ENCODE measurements at regions of chr1 and their contacts with region 1.

Region 1: GRCh38 chr1:154974063-154974807 is at the start of gene CKS1B:
- DNase-seq: peak; percentile 96 to 100
- H3K4me3 ChIP-seq: peak within 1 kb of the TSS; percentile 87
- H3K27ac ChIP-seq: peak within 1 kb of the TSS; percentile 97
- H3K4me1 ChIP-seq: peaks cover 48% of the 10 kb centered on the region
- H3K27me3 ChIP-seq: no peaks in the 10 kb centered on the region
- CTCF ChIP-seq: no peak
- total RNA-seq, gene CKS1B: 236 and 300 TPM in 2 replicates

Region 2: DNA sequence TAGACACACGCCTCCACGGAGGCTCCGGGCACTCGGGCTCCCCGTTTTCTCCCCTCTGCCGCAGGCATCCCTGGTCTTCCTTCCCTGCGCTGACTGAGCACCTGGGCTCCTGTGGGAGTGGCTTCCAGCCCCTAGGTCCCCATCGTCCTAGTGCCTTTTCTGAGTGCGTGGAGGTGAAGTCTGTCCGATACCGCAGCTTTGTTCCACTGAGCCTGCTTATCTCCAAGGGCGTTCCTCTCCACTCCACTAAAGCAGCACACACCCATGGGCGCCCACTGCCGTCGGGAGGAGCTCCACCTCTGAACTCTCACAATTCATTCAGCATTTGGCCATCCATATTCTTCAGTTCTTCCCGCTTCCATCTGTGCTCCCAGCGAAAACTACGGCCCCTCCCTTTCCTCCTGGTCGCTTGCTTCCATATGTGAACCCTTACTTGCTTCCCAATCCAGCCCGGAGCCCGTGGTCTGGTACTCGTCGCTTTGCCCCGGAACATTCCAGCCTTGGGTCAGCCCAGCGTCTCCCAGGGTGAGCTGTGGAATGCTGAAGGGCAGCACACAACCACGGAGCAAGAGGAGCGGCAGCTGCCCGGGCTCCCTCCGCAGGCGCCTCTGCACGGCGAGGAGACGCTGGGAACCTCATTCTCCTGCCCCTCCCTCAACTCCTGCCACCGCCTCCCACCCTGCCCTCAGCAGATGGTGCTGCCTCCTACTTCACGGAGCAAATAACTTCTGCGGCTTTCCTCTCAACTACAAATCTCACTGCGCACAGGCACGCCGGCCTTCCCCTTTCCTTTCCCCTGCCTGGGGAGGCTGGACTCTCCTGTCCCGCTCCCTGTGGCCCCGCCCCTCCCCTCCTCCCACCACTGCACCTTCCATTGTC is 621.4 kb before region 1 on chr1:
- CTCF ChIA-PET with region 1: no interaction called
- POLR2A ChIA-PET with region 1: interaction called, 12 read pairs
- intact Hi-C with region 1: no loop called
- DNase-seq: peak in 1 of 2 experiments; percentile 52
- H3K4me3 ChIP-seq: peak overlapping the region; percentile 27; the same call in 1 of the 2 replicates
- H3K27ac ChIP-seq: no peak overlapping the region
- H3K4me1 ChIP-seq: no peaks in the 10 kb centered on the region
- H3K27me3 ChIP-seq: peaks cover 45% of the 10 kb centered on the region
- CTCF ChIP-seq: no peak

Region 3: DNA sequence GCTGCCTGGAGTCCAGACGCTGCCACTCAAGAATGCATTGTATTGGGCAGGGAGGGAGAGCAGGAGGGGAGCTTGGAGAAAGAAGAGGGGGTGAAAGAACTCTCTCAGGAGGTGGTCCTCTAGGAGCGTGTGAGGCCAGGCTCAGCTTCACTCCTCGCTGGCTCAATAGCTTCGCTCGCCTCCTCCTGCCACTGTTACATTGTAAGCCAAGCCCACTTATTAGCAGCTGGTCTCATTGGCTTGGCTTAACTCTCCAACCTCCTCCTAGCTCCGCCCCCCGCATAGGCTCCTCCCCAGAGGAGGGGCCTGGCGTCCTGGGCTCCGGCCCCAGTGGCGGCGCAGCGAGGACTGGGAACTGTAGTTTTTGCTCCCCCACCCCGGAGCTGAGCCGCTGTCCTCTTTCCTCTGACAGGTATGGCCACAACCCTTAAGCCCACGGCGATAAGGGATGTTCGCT is 104.1 kb before region 1 on chr1 and contains the start of gene KCNN3:
- CTCF ChIA-PET with region 1: no interaction called
- POLR2A ChIA-PET with region 1: no interaction called
- intact Hi-C with region 1: no loop called
- DNase-seq: peak; percentile 42 to 85
- H3K4me3 ChIP-seq: no peak within 1 kb of the TSS
- H3K27ac ChIP-seq: no peak within 1 kb of the TSS
- H3K4me1 ChIP-seq: no peaks in the 10 kb centered on the region
- H3K27me3 ChIP-seq: peaks cover 72% of the 10 kb centered on the region
- CTCF ChIP-seq: no peak
- total RNA-seq, gene KCNN3: 0.33 and 1.1 TPM in 2 replicates

Region 4: DNA sequence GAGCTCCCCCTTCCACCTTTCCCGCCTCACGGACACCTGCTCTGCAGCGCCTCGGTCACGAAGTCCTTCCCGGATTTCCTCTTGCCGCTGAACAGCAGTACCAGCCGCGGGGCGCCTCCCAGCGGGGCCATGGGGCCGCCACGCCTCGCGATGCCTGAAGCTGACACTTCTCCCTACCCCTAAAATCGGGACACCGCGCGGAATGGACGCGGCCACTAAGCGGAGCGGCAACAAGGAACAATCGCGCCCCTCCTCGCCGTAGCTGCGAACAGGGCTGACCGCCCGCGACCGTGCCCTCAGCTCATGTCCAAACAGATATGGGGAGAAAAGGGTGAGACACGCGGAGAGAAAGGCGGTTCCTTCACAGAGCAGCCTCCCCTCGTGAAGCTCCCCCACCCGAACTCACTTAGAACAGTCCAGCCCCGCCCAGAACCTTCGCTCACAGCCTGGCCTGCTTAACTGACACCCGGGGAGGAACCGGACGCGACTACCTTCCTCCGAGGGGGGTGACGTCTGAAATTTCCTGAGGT is 37.6 kb before region 1 on chr1 and contains the start of gene PMVK:
- CTCF ChIA-PET with region 1: no interaction called
- POLR2A ChIA-PET with region 1: interaction called, 26 read pairs
- intact Hi-C with region 1: loop called (anchors 1 kb)
- DNase-seq: peak; percentile 87 to 95
- H3K4me3 ChIP-seq: peak within 1 kb of the TSS; percentile 62
- H3K27ac ChIP-seq: peak within 1 kb of the TSS; percentile 93
- H3K4me1 ChIP-seq: peaks cover 50% of the 10 kb centered on the region
- H3K27me3 ChIP-seq: no peaks in the 10 kb centered on the region
- CTCF ChIP-seq: peak; percentile 42; the same call in 1 of the 2 replicates
- total RNA-seq, gene PMVK: 27.1 and 38.2 TPM in 2 replicates

Region 5: GRCh38 chr1:154992721-154993571 is 18.7 kb after region 1 on chr1:
- CTCF ChIA-PET with region 1: interaction called, 6 read pairs
- POLR2A ChIA-PET with region 1: interaction called, 16 read pairs
- intact Hi-C with region 1: no loop called
- DNase-seq: no peak
- H3K4me3 ChIP-seq: no peak overlapping the region
- H3K27ac ChIP-seq: no peak overlapping the region
- H3K4me1 ChIP-seq: peaks cover 19% of the 10 kb centered on the region
- H3K27me3 ChIP-seq: no peaks in the 10 kb centered on the region
- CTCF ChIP-seq: no peak; the same call in 1 of the 2 replicates

Region 6: GRCh38 chr1:155017041-155017945 is 43.1 kb after region 1 on chr1:
- CTCF ChIA-PET with region 1: interaction called, 17 read pairs
- POLR2A ChIA-PET with region 1: interaction called, 3 read pairs
- intact Hi-C with region 1: loop called (anchors 1 kb)
- DNase-seq: peak; percentile 91 to 99
- H3K4me3 ChIP-seq: peak overlapping the region; percentile 37; the same call in 1 of the 2 replicates
- H3K27ac ChIP-seq: peak overlapping the region; percentile 53
- H3K4me1 ChIP-seq: peaks cover 36% of the 10 kb centered on the region
- H3K27me3 ChIP-seq: no peaks in the 10 kb centered on the region
- CTCF ChIP-seq: peak; percentile 93

Region 7: DNA sequence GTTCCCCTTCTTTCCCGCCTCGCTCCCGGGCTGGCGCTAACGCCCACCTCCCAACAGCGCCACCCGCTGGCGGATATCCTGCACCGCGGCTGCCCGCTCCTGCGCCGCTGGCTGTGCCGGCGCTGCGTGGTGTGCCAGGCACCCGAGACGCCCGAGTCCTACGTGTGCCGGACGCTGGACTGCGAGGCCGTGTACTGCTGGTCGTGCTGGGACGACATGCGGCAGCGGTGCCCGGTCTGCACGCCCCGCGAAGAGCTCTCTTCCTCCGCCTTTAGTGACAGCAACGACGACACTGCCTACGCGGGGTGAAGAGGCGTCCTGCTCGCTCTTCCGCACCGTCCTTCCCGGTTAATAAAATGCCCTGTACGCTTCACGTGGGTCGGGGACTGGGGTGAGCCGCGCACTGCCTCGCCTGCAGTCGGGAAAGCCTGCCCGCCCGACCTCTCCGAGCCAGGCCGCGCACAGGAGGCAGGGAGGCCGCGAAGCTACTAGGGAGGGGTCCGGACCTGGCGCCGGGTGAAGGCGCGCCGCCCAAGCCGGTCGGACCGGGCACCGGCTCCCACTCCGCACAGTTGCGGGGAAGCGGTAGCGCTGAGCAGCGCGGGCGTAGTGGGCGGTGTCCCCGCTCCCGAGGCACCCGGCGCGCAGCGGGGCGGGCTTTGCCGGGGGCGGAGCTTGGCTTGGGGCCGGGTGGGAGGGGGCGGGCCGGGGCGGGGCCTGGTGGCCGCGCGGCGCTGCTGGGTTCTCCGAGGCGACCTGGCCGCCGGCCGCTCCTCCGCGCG is 76.5 kb after region 1 on chr1 and contains the start of gene ADAM15:
- CTCF ChIA-PET with region 1: interaction called, 5 read pairs
- POLR2A ChIA-PET with region 1: interaction called, 10 read pairs
- intact Hi-C with region 1: no loop called
- DNase-seq: peak; percentile 64 to 88
- H3K4me3 ChIP-seq: peak within 1 kb of the TSS; percentile 73
- H3K27ac ChIP-seq: peak within 1 kb of the TSS; percentile 67
- H3K4me1 ChIP-seq: peaks cover 34% of the 10 kb centered on the region
- H3K27me3 ChIP-seq: no peaks in the 10 kb centered on the region
- CTCF ChIP-seq: peak; percentile 89
- total RNA-seq, gene ADAM15: 187 and 195 TPM in 2 replicates

Region 8: GRCh38 chr1:155181771-155182550 is 207.7 kb after region 1 on chr1:
- CTCF ChIA-PET with region 1: no interaction called
- POLR2A ChIA-PET with region 1: no interaction called
- intact Hi-C with region 1: no loop called
- DNase-seq: no peak
- H3K4me3 ChIP-seq: no peak overlapping the region
- H3K27ac ChIP-seq: no peak overlapping the region
- H3K4me1 ChIP-seq: peaks cover 18% of the 10 kb centered on the region
- H3K27me3 ChIP-seq: no peaks in the 10 kb centered on the region
- CTCF ChIP-seq: no peak

Region 9: DNA sequence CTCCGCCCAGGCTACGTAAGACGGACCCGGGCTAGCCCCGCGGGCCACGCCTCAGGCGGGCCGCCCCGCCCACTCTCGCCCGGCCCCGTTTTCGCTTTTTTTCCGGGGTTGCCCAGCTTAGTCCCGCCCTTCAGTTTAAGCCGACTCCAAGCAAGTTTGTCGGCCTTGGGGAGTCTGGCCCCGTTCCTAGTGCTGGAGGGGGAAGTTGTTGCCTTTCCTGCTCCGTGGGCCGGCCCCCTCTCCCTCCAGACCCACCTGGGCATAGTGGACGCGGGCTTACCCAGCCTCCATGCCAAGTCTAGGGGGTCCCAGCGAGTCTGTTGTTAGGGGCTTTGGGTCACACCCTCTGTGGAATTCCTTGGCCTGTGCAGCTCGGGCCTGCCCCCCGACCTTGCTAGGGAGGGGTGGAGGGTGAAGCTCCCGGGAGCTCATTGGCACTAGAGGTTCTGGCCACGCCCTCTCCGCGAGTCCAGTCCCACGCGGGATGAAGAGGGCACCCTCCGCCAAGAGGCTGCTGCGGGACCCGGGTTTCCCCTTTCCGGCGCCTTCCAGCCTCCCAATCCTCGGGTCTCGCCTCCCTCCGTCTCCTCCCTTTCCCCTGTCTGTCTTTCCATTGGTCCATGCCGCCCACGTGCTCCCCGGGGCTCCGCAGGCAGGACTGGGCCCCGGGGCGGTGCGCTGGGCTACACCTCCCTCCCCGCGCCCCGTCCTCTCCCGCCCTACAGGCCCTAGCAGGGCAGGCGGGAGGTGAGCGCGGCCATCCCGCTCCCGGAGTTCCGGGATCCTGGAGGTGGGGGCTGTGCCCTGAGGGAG is 349.8 kb after region 1 on chr1:
- CTCF ChIA-PET with region 1: no interaction called
- POLR2A ChIA-PET with region 1: no interaction called
- intact Hi-C with region 1: loop called (anchors 5 kb)
- DNase-seq: peak; percentile 86 to 96
- H3K4me3 ChIP-seq: peak overlapping the region; percentile 96
- H3K27ac ChIP-seq: peak overlapping the region; percentile 49
- H3K4me1 ChIP-seq: peaks cover 9% of the 10 kb centered on the region; the same call in 1 of the 2 replicates
- H3K27me3 ChIP-seq: no peaks in the 10 kb centered on the region
- CTCF ChIP-seq: no peak

Region 10: DNA sequence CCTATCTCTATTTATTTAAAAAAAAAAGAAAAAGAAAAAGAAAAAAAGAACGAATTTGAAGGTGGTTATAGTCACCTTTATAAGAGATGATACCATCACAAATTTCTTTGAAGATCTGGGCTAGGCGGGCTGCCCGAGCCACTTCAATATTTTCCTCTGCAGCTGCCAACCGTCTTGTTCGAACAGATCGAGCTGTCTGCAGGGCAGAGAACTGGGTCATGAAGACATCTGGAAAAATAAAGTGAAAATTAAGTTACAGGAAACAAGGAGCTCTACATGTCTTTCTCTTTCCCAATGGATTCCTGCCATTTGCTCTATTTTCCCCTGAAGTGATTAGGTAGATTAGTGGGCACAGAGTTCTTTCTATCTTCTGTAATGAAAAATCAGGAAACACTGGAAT is 378.4 kb after region 1 on chr1:
- CTCF ChIA-PET with region 1: no interaction called
- POLR2A ChIA-PET with region 1: no interaction called
- intact Hi-C with region 1: no loop called
- DNase-seq: no peak
- H3K4me3 ChIP-seq: no peak overlapping the region
- H3K27ac ChIP-seq: no peak overlapping the region
- H3K4me1 ChIP-seq: no peaks in the 10 kb centered on the region
- H3K27me3 ChIP-seq: no peaks in the 10 kb centered on the region
- CTCF ChIP-seq: no peak